Dorsolateral prefrontal cortex (tissue), 120 donors: ENCODE measurements at regions of chr1 and their contacts with region 1.

Region 1: GRCh38 chr1:109773146-109773899 is 9.6 kb upstream of the EPS8L3 start:
- DNase-seq: peak; percentile 58 to 88 (median 84)
- H3K4me3 ChIP-seq: no peak overlapping the region
- H3K27ac ChIP-seq: peak overlapping the region in 3 of 59 donors; percentile 18 to 49 (median 36)
- H3K27me3 ChIP-seq: no peaks in the 10 kb centered on the region
- CTCF ChIP-seq: peak; percentile 44 to 90 (median 83)

Region 2: DNA sequence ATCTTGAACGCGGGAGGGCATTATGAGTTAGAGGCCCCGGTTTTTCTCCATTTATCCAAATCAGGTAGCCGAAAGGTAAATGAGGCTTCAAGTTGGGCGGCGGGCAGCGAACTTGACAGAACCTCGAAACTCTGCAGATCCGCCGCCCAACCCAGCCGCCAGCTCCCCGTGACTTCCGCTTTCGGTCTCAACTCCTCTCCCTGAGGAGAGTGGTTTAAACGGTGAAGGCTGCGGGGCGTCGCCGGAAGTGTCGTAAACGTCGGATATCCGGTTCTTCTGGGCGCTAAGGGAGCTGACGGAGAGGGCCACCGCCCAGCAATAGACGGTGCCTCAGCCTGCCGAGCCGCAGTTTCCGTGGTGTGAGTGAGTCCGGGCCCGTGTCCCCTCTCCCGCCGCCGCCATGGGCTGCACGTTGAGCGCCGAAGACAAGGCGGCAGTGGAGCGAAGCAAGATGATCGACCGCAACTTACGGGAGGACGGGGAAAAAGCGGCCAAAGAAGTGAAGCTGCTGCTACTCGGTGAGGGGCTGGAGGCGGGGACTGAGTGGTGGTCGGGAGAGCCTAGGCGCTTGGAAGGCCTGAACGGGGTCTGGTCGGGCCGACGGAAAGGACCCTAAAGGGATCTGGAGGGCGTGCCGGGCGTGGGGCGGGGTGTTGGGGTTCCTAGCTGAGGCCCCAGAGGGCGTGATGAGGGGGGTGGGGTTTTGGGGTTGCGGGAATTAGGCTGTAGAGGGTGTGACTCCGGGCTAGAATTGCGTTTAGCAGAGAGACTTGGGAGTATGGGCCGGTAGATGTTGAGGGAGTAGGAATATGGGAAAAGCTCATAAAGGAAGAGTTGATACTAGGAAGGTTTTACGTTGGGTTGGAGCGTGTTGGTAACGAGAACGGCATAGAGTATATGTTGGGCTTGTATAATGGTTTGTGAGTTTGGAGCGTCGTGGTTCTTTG is 224.7 kb before region 1 on chr1 and contains the start of gene GNAI3:
- intact Hi-C with region 1: loop called (anchors 2 kb)
- DNase-seq: peak; percentile 96 to 99 (median 98)
- H3K4me3 ChIP-seq: peak within 1 kb of the TSS; percentile 70 to 99 (median 93)
- H3K27ac ChIP-seq: peak within 1 kb of the TSS; percentile 46 to 98 (median 90)
- H3K27me3 ChIP-seq: no peaks in the 10 kb centered on the region
- CTCF ChIP-seq: peak in 33 of 56 donors; percentile 7 to 65 (median 30)
- total RNA-seq, gene GNAI3: 3.6 to 7.2 (median 5.2) TPM

Region 3: DNA sequence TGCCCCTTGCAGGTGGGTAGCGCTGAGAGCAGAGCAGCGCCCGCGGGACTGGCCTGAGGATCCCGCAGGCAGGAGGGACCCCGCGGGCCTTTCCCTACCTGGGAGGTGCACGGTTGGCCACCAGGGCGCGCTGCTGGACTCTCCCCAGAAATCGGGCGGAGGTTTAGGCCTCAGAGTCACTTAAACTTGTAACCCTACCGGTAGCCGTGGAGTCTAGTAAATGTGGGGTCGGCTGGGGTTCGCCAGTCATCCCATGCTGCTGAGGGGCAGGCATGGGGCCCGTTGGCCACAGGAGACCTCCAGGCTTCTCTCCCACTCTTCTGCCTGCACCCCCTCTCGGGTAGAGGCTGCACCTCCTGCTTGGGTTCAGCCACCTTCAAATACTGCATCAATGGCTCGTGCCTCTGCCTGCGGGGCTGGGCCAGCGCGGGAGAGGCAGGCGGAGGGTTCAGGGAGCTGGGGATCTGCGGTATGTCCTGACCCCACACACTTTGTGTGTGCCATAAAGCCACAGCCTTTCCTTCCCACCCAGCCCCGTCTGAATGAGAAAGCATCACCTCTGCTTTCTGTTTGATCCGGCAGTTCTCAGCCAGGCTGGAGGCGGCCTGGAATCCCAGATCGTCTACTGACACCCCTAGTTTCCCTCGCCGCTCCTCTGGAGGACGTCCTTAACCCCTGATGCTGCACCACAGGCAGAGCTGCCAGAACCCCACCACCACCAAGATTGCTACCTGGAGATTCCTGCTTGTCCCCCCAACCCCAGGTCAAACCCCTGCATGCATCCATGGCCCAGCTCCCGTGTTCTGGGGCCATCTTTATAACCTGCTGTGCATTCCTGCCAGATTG is 129.7 kb before region 1 on chr1:
- intact Hi-C with region 1: loop called (anchors 2 to 5 kb)
- DNase-seq: peak in 5 of 10 donors; percentile 50 to 71 (median 63)
- H3K4me3 ChIP-seq: peak overlapping the region in 11 of 59 donors; percentile 2 to 28 (median 13)
- H3K27ac ChIP-seq: peak overlapping the region in 3 of 59 donors; percentile 11 to 47 (median 28)
- H3K27me3 ChIP-seq: no peaks in the 10 kb centered on the region
- CTCF ChIP-seq: peak; percentile 38 to 81 (median 65)

Region 4: DNA sequence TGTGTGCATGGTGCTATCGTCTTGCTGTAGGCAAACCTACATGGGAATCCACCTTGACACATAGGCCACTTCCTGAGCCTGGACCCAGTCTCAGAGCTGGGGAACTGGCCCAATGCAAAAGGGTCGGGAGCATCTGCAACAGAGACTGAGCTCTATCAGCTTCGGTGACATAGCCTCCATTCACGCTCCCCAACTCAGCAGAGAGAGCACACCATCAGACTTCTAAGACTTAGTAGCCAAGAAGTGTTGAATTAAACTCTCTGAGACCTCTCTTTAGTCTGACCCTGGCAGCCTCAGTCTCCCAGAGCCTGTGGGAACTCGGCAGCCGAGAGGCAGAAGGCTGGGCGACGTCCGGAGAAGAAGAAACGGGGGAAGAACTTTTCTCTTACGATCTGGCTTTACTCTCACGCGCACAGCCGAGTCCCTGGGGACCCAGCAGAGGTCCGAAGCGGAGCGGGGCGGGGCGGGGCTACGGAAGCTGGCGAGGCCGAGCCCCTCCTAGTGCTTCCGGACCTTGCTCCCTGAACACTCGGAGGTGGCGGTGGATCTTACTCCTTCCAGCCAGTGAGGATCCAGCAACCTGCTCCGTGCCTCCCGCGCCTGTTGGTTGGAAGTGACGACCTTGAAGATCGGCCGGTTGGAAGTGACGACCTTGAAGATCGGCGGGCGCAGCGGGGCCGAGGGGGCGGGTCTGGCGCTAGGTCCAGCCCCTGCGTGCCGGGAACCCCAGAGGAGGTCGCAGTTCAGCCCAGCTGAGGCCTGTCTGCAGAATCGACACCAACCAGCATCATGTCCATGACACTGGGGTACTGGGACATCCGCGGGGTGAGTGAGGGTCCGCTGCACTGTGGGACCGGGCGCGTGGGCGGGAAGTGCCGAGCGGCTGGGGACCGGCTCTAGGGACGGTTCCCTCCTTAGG is 117.5 kb before region 1 on chr1 and contains the start of gene GSTM4:
- intact Hi-C with region 1: loop called in 1 of 2 experiments (anchors 5 kb)
- DNase-seq: peak; percentile 70 to 86 (median 76)
- H3K4me3 ChIP-seq: peak within 1 kb of the TSS; percentile 63 to 91 (median 82)
- H3K27ac ChIP-seq: peak within 1 kb of the TSS in 58 of 59 donors; percentile 26 to 95 (median 84)
- H3K27me3 ChIP-seq: no peaks in the 10 kb centered on the region
- CTCF ChIP-seq: peak in 35 of 56 donors; percentile 13 to 47 (median 33)
- total RNA-seq, gene GSTM4: 22.6 to 66.7 (median 45.4) TPM

Region 5: DNA sequence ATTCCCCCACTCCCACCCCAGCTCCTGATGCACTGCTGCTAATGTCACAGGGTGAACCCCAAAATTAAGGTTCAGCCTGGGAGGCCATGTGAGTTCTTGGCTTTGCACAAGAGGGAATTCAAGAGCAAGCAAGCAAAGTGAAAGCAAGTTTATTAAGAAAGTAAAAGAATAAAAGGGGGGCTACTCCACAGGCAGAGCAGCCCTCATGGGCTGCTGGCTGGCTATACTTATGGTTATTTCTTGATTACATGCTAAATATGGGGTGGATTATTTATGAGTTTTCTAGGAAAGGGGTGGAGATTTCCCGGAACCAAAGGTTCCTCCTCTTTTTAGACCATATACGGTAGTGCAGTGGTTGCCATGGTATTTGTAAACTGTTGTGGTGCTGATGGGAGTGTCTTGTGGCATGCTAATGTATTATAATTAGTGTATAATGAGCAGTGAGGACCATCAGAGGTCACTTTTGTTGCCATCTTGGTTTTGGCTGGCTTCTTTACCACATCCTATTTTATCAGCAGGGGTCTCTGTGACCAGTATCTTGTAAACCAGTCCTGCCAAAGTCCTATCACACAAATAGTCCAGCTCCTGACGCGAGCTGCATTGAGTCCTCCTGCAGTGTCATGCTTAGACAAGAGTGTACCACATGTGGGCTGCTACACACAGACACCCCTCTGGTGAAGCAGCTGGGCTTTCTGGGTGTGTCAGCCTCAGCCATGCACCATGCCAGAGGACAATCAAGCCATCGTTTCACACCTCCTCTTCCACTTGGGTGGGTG is 90.9 kb after region 1 on chr1:
- intact Hi-C with region 1: no loop called
- DNase-seq: peak in 1 of 10 donors; percentile 25
- H3K4me3 ChIP-seq: peak overlapping the region in 16 of 59 donors; percentile 0 to 38 (median 11)
- H3K27ac ChIP-seq: peak overlapping the region in 51 of 59 donors; percentile 8 to 85 (median 54)
- H3K27me3 ChIP-seq: no peaks in the 10 kb centered on the region
- CTCF ChIP-seq: no peak